ENCODE measurements at regions of chr11 and their contacts with region 1.

Region 1: GRCh38 chr11:118883368-118884071 is at the start of gene CXCR5:
- DNase-seq: no peak
- H3K4me3 Mint-ChIP-seq: no peak within 1 kb of the TSS
- H3K27ac Mint-ChIP-seq: peak within 1 kb of the TSS; percentile 76
- H3K4me1 Mint-ChIP-seq: peaks cover 50% of the 10 kb centered on the region
- H3K27me3 Mint-ChIP-seq: peaks cover 26% of the 10 kb centered on the region

Region 2: DNA sequence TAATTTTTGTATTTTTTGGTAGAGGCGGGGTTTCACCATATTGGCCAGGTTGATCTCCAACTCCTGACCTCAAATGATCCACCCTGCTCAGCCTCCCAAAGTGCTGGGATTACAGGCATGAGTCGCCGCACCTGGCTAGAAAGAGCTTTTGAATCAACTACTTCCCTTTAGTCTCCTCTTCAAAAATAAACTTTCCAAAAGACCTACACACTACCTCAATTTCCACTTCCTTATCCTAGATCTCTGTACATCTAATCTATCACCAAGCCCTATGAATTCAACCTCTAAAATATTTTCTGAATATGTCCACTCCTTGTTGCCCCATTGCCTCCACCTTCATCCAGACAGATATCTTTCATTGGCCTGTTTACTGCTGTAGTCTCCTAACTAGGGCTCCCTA is 79.4 kb before region 1 on chr11:
- CTCF ChIA-PET with region 1: no interaction called
- DNase-seq: no peak
- H3K4me3 Mint-ChIP-seq: no peak overlapping the region
- H3K27ac Mint-ChIP-seq: no peak overlapping the region
- H3K4me1 Mint-ChIP-seq: no peaks in the 10 kb centered on the region
- H3K27me3 Mint-ChIP-seq: peaks cover 4% of the 10 kb centered on the region

Region 3: DNA sequence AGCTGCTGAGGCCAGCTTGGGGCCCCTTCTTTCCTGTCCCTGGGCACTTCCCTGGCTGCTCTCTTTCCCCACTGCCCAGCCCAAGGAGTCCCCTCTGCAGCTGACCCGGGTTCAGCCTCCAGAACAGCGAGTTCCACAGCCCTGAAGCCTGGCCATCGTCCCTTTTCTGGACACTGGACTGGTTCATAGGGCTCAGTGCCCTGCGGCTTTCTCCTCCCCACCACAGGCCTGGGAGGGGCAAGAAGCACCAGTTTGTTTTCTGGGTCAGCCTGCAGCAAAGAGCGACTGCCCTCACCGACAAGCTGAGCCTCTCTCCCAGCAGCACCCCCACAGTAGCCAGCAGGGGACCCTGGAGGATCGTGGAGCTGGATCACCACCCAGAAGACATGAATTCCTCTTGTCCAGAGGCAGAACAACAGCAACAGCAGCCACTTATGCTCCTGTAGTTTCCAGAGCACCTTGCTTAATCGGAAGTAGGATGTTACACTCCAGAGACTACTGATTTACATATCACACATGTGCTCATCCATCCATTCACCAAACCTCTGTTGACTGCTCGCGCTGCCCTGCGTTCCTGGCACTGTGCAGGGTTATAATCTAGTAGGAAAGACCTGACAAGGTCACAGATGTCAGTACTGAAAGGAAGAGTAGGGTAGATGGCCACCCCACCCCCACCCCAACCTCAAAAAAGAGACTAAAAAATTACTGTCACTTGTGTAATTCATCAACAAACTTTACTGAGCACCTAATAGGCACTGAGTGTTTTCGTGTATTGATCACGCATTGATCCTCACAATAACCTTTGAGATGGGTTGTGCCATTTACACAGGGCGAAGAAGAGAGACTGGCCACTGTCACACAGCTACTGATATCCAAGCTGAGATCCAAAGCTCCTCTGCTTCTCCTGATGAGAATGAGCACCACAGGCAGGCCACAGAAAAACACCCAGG is 12.8 kb before region 1 on chr11:
- CTCF ChIA-PET with region 1: interaction called, 12 read pairs
- DNase-seq: peak; percentile 50
- H3K4me3 Mint-ChIP-seq: peak overlapping the region; percentile 72
- H3K27ac Mint-ChIP-seq: peak overlapping the region; percentile 99
- H3K4me1 Mint-ChIP-seq: peaks cover 64% of the 10 kb centered on the region
- H3K27me3 Mint-ChIP-seq: peaks cover 5% of the 10 kb centered on the region